ENCODE measurements at regions of chr4 and their contacts with region 1.

Region 1: GRCh38 chr4:2412885-2413716 is 5.3 kb downstream of the ZFYVE28 start:
- DNase-seq: peak; percentile 98
- ATAC-seq: peak; percentile 81
- H3K4me3 Mint-ChIP-seq: peak overlapping the region; percentile 63
- H3K27ac Mint-ChIP-seq: peak overlapping the region; percentile 97
- H3K4me1 Mint-ChIP-seq: peaks cover 73% of the 10 kb centered on the region
- H3K27me3 Mint-ChIP-seq: peaks cover 10% of the 10 kb centered on the region

Region 2: GRCh38 chr4:2402029-2402428 is 11.1 kb before region 1 on chr4:
- CTCF ChIA-PET with region 1: interaction called, 28 read pairs
- DNase-seq: no peak
- ATAC-seq: peak; percentile 35
- H3K4me3 Mint-ChIP-seq: peak overlapping the region; percentile 9
- H3K27ac Mint-ChIP-seq: peak overlapping the region; percentile 24
- H3K4me1 Mint-ChIP-seq: peaks cover 35% of the 10 kb centered on the region
- H3K27me3 Mint-ChIP-seq: no peaks in the 10 kb centered on the region